Sigmoid colon (tissue), 7 donors: ENCODE measurements at regions of chr10 and their contacts with region 1.

Region 1: GRCh38 chr10:86376852-86377796 is 10.5 kb upstream of the GRID1 start:
- DNase-seq: peak; percentile 82
- H3K4me3 ChIP-seq: peak overlapping the region in 3 of 4 donors; percentile 12 to 35 (median 34)
- H3K27ac ChIP-seq: no peak overlapping the region
- H3K4me1 ChIP-seq: peaks cover 0 to 8% (median 7%) of the 10 kb centered on the region in 4 donors
- H3K27me3 ChIP-seq: peaks cover 4 to 63% (median 35%) of the 10 kb centered on the region in 3 donors
- CTCF ChIP-seq: peak; percentile 66 to 99 (median 86)
- EP300 ChIP-seq: no peak
- POLR2A ChIP-seq: no peak

Region 2: DNA sequence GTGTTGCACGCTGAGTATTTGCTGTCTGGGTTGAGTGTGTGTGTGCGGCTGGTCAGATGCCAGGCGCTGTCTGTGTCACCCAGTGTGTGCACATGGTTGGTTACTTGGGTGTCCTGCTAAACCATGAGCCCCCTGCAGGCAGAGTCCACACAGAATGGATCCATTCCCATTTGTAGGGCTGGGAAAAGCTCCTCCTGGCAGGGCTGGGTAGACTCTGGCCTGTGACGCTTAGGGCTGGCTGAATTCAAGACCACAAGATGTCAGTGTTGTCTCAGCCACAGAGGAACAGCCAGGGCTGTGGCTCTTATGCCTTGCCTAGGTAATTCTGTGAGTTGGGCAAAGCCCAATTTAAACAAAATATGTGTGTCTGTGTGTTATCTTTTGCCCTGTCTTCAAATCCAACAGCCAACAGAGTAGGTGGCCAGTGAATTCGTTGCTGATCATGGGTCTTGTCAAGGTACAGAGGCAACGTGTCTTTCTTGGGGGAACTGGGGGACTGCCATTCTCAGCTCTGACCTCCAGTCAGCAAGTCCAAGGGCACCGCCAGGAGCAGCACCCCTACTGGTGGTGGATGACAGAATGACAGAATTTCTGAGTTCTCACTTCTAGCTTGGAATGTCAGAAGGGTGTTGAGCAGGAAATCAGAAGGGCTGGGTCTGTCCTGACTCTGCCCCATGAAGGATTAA is 1763.6 kb before region 1 on chr10:
- intact Hi-C with region 1: loop called (anchors 5 kb)
- DNase-seq: no peak
- H3K4me3 ChIP-seq: no peak overlapping the region
- H3K27ac ChIP-seq: no peak overlapping the region
- H3K4me1 ChIP-seq: no peaks in the 10 kb centered on the region
- H3K27me3 ChIP-seq: no peaks in the 10 kb centered on the region
- CTCF ChIP-seq: peak in 2 of 4 experiments; percentile 18 to 43
- EP300 ChIP-seq: no peak
- POLR2A ChIP-seq: no peak

Region 3: GRCh38 chr10:85548034-85548433 is 829.1 kb before region 1 on chr10:
- intact Hi-C with region 1: loop called (anchors 5 kb)
- DNase-seq: no peak
- H3K4me3 ChIP-seq: no peak overlapping the region
- H3K27ac ChIP-seq: no peak overlapping the region
- H3K4me1 ChIP-seq: no peaks in the 10 kb centered on the region
- H3K27me3 ChIP-seq: no peaks in the 10 kb centered on the region
- CTCF ChIP-seq: peak in 2 of 4 experiments; percentile 20 to 25
- EP300 ChIP-seq: no peak
- POLR2A ChIP-seq: no peak

Region 4: DNA sequence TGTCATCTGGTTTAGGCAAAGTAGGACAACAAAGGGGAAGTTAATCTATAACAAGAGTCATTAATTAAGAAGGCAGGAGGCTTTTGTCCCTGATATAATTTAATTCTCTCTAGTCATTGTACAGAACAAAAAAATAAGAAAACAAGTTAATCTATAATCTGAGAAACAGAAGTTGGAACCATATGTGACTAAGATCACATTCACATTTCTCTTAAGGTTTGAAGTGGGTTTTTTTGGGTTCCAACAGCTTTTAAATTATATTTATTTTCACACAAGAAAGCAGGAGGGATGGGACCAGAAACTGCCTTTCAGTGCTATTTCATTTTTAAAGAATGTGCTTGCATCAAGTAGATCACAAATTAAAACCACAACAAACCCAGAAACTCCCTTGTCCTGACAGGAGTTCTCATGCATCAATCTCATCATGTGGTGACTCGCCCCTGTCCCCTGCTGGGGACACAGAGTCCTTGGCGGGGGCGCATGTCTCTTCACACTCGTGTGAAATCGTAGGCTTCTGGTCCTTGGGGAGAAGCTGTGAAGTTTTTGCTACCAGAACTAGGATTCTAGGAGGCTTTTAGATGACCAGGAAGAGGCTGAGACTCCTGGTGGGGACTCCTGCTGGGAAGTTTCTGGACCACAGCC is 267.1 kb after region 1 on chr10:
- intact Hi-C with region 1: no loop called
- DNase-seq: no peak
- H3K4me3 ChIP-seq: no peak overlapping the region
- H3K27ac ChIP-seq: peak overlapping the region in 1 of 4 donors; percentile 43
- H3K4me1 ChIP-seq: peaks cover 0 to 26% (median 9%) of the 10 kb centered on the region in 4 donors
- H3K27me3 ChIP-seq: no peaks in the 10 kb centered on the region
- CTCF ChIP-seq: no peak
- EP300 ChIP-seq: peak in 1 of 4 donors; percentile 50
- POLR2A ChIP-seq: no peak